ENCODE measurements at regions of chr1 and their contacts with region 1.

Region 1: GRCh38 chr1:16366722-16367257 is at the start of gene SZRD1:
- DNase-seq: peak in 9 of 10 donors; percentile 91 to 99 (median 96)
- ATAC-seq: peak; percentile 88 to 91
- H3K4me3 Mint-ChIP-seq: peak within 1 kb of the TSS; percentile 94 to 99 (median 96)
- H3K27ac Mint-ChIP-seq: peak within 1 kb of the TSS; percentile 92 to 100 (median 98)
- H3K4me1 Mint-ChIP-seq: peaks cover 9 to 52% (median 32%) of the 10 kb centered on the region in 4 donors
- H3K27me3 Mint-ChIP-seq: no peaks in the 10 kb centered on the region
- polyA plus RNA-seq, gene SZRD1: 47.5 to 50.1 (median 49.7) TPM

Region 2: DNA sequence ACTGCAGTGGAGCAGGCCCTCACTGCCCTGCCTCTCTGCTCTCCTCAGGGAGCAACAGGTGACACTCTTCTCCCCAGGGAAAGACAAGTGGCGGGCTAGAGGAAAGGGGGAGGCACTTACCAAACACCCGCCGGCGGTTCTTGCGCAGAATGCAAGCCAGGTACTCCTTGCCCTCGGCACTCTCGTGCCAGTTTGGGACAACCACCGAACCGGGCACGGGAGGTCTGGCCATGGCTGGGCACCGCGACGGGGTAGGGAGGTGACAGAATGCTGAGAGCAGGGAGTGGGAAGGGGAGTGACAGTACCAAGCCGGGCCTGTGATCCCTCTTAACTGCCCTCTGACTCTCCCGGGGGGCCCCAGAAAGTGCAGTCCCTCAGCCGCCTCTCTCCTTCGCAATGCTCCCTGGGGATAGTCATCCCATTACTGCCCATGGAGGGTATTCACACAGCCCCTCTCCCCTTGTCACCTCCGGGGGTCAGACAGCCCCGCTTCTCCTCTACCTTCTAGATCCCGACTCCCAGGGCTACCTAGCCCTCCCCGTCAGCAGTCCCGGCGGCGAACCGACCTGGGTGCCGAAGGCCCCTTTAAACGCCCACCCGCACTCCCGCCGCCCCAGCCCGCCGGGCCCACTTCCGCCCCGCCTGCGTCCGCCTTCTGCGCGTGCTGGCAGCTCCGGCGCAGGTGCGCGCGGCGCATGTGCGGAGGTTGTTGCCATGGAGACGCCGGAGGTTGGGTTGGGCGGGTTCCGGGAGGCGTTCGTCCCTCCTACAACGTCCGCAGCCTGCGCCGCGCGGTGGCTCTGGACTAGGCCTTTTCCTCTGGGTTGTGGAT is 130.1 kb before region 1 on chr1 and contains the start of gene CPLANE2:
- POLR2A ChIA-PET with region 1: no interaction called
- DNase-seq: peak; percentile 92 to 97 (median 95)
- ATAC-seq: peak; percentile 79 to 83
- H3K4me3 Mint-ChIP-seq: peak within 1 kb of the TSS; percentile 90 to 95 (median 92)
- H3K27ac Mint-ChIP-seq: peak within 1 kb of the TSS; percentile 86 to 99 (median 96)
- H3K4me1 Mint-ChIP-seq: peaks cover 9 to 28% (median 20%) of the 10 kb centered on the region in 4 donors
- H3K27me3 Mint-ChIP-seq: no peaks in the 10 kb centered on the region
- polyA plus RNA-seq, gene CPLANE2: 1.7 to 2.9 (median 2.7) TPM

Region 3: DNA sequence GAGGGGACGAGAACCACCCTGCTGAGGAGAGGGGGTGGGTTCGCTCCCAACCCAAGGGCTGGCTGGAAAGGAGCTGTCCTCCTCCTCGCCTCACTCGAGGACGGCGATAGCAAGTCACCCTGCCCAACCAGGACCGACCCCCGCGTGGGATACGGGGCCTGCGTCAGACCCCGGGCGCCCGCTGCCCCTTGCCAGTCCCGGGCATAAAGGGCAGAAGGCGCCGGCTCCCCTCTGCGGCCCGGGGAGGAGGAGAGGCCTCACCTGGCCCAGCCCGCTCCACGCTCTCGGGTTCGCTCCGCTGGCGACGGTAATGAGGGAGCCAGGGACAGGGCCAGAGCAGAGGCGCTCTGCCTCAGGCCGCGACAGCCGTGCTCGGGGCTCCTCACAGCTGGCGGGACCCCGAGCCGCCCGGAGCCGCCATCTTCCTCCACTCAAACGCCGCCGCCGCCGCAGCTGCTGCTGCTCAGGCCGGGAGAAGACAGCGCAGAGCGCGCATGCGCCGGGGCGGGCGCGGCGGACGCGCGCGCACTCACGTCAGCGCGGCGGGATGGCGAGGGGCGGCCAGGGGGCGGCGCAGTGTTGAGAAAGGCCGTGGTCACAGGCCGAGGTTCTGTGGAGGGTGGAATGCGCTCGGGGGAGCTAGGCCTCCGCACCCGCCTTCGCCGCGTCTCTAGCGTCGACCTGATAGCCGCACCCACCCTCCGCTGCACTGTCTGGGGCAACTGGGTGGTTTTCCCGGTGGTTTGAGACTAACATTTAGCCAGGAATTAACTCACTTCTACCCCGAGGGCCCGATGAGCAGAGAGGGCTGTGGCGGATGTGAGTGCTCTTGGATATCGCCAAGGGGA is 14.6 kb before region 1 on chr1 and contains the start of gene FBXO42:
- POLR2A ChIA-PET with region 1: interaction called, 69 read pairs
- DNase-seq: peak; percentile 89 to 96 (median 92)
- ATAC-seq: peak; percentile 86 to 92
- H3K4me3 Mint-ChIP-seq: peak within 1 kb of the TSS; percentile 89 to 96 (median 93)
- H3K27ac Mint-ChIP-seq: peak within 1 kb of the TSS; percentile 80 to 98 (median 94)
- H3K4me1 Mint-ChIP-seq: peaks cover 11 to 55% (median 42%) of the 10 kb centered on the region in 4 donors
- H3K27me3 Mint-ChIP-seq: no peaks in the 10 kb centered on the region
- polyA plus RNA-seq, gene FBXO42: 11.8 to 21.5 (median 15.5) TPM

Measured in naive thymus-derived CD8-positive, alpha-beta T cell (primary cell).